Caco-2 (cell line): ENCODE measurements at regions of chr5 and their contacts with region 1.

Region 1: GRCh38 chr5:132963175-132964104 is at the start of gene AFF4:
- DNase-seq: peak; percentile 97 to 99
- H3K4me3 ChIP-seq: peak within 1 kb of the TSS; percentile 88
- H3K4me3 Mint-ChIP-seq: peak within 1 kb of the TSS; percentile 96
- H3K27ac Mint-ChIP-seq: peak within 1 kb of the TSS; percentile 99
- H3K4me1 ChIP-seq: 0 out of 2 replicates have a peak, but pooled peaks cover 4% of the 10 kb centered on the region
- H3K4me1 Mint-ChIP-seq: no peaks in the 10 kb centered on the region
- H3K27me3 ChIP-seq: no peaks in the 10 kb centered on the region
- H3K27me3 Mint-ChIP-seq: no peaks in the 10 kb centered on the region
- CTCF ChIP-seq: no peak
- total RNA-seq, gene AFF4: 62.6 and 63.9 TPM in 2 replicates

Region 2: DNA sequence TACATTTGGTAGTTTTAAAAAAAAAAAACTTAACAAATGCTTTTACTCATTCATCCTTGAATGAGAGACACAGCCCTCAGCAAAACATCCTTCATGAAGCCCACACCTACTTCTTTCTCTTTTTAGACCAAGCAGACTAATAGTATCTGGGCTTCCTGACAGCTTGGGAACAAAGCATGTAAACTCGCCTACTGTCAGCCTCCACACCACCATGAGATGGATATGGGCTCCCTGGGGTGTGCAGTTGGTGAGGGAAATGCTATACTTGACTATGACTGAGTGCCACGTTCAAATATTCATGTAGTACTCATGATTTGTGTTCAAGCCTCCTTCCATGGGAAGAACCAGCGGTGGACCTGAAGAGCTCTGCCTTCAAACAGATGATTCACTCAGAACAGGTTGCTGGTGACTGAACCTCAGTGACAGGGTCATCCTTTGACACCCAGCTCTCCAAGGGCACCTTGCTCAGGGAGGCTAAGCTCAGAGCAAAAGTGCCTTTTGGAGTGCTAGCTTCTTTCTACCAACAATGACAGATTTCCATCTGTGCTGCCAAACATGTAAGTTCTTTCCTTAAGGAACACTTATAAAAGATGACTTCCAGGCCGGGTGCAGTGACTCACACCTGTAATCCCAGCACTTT is 557.2 kb before region 1 on chr5:
- CTCF ChIA-PET with region 1: no interaction called
- POLR2A ChIA-PET with region 1: no interaction called
- intact Hi-C with region 1: no loop called
- DNase-seq: no peak
- H3K4me3 ChIP-seq: no peak overlapping the region
- H3K4me3 Mint-ChIP-seq: no peak overlapping the region
- H3K27ac Mint-ChIP-seq: no peak overlapping the region
- H3K4me1 ChIP-seq: peaks cover 11% of the 10 kb centered on the region
- H3K4me1 Mint-ChIP-seq: peaks cover 8% of the 10 kb centered on the region
- H3K27me3 ChIP-seq: no peaks in the 10 kb centered on the region
- H3K27me3 Mint-ChIP-seq: no peaks in the 10 kb centered on the region
- CTCF ChIP-seq: no peak

Region 3: GRCh38 chr5:132941331-132941730 is 22.1 kb before region 1 on chr5:
- CTCF ChIA-PET with region 1: no interaction called
- POLR2A ChIA-PET with region 1: no interaction called
- intact Hi-C with region 1: no loop called
- DNase-seq: no peak
- H3K4me3 ChIP-seq: no peak overlapping the region
- H3K4me3 Mint-ChIP-seq: no peak overlapping the region
- H3K27ac Mint-ChIP-seq: no peak overlapping the region
- H3K4me1 ChIP-seq: no peaks in the 10 kb centered on the region
- H3K4me1 Mint-ChIP-seq: no peaks in the 10 kb centered on the region
- H3K27me3 ChIP-seq: no peaks in the 10 kb centered on the region
- H3K27me3 Mint-ChIP-seq: no peaks in the 10 kb centered on the region
- CTCF ChIP-seq: no peak

Region 4: DNA sequence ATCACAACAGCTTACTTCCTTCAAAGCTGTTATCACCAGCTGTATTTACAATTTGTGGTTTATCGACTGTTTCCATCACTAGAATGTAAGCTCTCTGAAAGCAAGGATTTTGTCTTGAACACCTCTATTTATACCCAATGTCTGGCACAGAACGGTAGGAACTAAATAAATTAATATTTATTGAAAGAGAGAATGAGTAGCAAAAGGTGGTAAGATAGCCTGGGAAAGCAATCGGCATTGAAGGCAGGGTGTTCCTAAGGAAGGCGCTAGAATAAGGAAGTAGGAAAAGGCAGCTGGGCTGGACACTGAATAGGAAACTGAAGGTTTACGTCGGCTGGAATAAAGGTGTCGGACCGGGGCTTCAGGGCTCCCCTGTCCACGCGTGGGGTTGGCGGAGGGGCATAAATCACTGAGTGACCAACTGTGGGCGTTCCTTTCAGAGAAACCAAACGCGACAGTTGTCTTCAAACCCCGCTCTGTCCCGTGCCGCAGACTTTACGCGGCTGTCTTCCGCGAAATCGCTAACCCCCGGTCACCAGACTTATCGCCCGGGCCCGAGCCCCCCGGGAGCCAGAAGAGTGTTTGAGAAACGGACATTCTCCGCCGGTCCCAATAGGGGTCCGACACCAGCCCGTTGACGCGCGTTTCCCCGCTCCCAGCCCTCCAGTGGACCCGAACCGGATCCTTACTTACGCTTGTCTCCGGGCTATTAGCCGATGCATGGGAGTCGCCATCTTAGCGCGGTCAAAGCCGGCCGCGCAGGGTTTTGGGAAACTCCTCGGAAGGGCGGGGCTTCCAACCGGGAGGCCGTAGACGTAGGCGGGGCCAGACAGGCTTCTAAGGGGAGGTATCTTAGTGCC is 62.6 kb after region 1 on chr5 and contains the start of gene ZCCHC10:
- CTCF ChIA-PET with region 1: no interaction called
- POLR2A ChIA-PET with region 1: interaction called, 4 read pairs
- intact Hi-C with region 1: loop called (anchors 1 kb)
- DNase-seq: peak; percentile 94 to 96
- H3K4me3 ChIP-seq: peak within 1 kb of the TSS; percentile 64
- H3K4me3 Mint-ChIP-seq: peak within 1 kb of the TSS; percentile 89
- H3K27ac Mint-ChIP-seq: peak within 1 kb of the TSS; percentile 91
- H3K4me1 ChIP-seq: peaks cover 16% of the 10 kb centered on the region
- H3K4me1 Mint-ChIP-seq: peaks cover 8% of the 10 kb centered on the region
- H3K27me3 ChIP-seq: no peaks in the 10 kb centered on the region
- H3K27me3 Mint-ChIP-seq: no peaks in the 10 kb centered on the region
- CTCF ChIP-seq: no peak
- total RNA-seq, gene ZCCHC10: 32.9 and 34.8 TPM in 2 replicates

Region 5: GRCh38 chr5:133032852-133033742 is 69.7 kb after region 1 on chr5:
- CTCF ChIA-PET with region 1: no interaction called
- POLR2A ChIA-PET with region 1: interaction called, 11 read pairs
- intact Hi-C with region 1: no loop called
- DNase-seq: no peak
- H3K4me3 ChIP-seq: no peak overlapping the region
- H3K4me3 Mint-ChIP-seq: peak overlapping the region; percentile 40
- H3K27ac Mint-ChIP-seq: peak overlapping the region; percentile 80
- H3K4me1 ChIP-seq: peaks cover 16% of the 10 kb centered on the region
- H3K4me1 Mint-ChIP-seq: peaks cover 17% of the 10 kb centered on the region
- H3K27me3 ChIP-seq: no peaks in the 10 kb centered on the region
- H3K27me3 Mint-ChIP-seq: no peaks in the 10 kb centered on the region
- CTCF ChIP-seq: no peak